ENCODE measurements at regions of chr2 and their contacts with region 1.

Region 1: GRCh38 chr2:85369500-85369899 is 14.9 kb downstream of the ELMOD3 start:
- DNase-seq: peak; percentile 83
- ATAC-seq: peak; percentile 100
- H3K4me3 ChIP-seq: no peak overlapping the region
- H3K27ac ChIP-seq: 0 out of 2 replicates have a peak overlapping the region, but pooled peaks have one; percentile 15
- H3K4me1 ChIP-seq: peaks cover 14% of the 10 kb centered on the region
- H3K27me3 ChIP-seq: no peaks in the 10 kb centered on the region
- CTCF ChIP-seq: no peak

Region 2: DNA sequence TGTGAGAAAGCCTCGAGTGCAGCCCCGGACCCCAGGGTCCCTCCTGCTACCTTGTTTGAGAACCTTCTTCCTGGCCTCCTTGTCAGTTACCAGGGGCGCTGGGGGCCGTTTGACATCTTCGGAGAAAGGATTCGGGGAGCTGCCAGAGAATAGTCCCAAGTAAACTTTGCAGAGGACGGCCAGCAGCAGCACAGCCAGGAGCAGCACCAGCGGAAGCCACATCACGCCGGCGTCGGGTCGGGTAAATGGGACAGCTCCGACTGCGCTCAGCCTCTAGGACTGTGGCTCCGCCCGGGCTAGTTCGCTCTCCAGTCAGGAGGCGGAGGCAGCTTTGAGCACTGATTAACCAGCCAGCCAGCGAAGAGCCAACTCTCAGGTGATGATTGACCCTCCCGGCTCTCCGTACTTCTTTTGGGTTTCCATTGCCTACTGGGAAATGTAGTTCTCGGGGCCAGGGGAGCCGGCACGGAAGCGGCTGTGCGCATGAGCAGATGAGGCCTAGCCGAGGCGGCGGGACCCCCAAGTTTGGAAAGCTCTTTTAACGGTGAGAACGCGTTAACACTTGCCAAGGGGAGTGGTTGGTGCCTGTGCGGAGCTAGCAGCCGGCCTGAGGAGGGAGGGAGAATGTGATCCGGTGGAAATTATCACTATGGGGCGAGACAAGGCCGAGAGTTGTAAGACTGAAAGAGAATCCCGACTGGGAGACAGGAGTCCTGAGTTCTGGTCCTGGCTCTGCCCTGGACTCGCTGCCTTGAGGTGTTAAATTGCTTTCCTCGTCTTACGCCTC is 15.0 kb before region 1 on chr2 and contains the starts of genes ELMOD3 and RETSAT:
- CTCF ChIA-PET with region 1: no interaction called
- POLR2A ChIA-PET with region 1: no interaction called
- intact Hi-C with region 1: loop called (anchors 1 kb)
- DNase-seq: peak; percentile 99
- ATAC-seq: peak; percentile 97
- H3K4me3 ChIP-seq: peak within 1 kb of the TSS; percentile 84
- H3K27ac ChIP-seq: peak within 1 kb of the TSS; percentile 61
- H3K4me1 ChIP-seq: peaks cover 32% of the 10 kb centered on the region
- H3K27me3 ChIP-seq: no peaks in the 10 kb centered on the region
- CTCF ChIP-seq: no peak
- total RNA-seq, gene ELMOD3: 16.7 and 19.0 TPM in 2 replicates
- total RNA-seq, gene RETSAT: 39.1 and 50.8 TPM in 2 replicates

Region 3: GRCh38 chr2:85524336-85524933 is 154.9 kb after region 1 on chr2:
- CTCF ChIA-PET with region 1: no interaction called
- POLR2A ChIA-PET with region 1: no interaction called
- intact Hi-C with region 1: no loop called
- DNase-seq: no peak
- ATAC-seq: peak; percentile 67
- H3K4me3 ChIP-seq: no peak overlapping the region
- H3K27ac ChIP-seq: no peak overlapping the region
- H3K4me1 ChIP-seq: 0 out of 2 replicates have a peak, but pooled peaks cover 5% of the 10 kb centered on the region
- H3K27me3 ChIP-seq: no peaks in the 10 kb centered on the region
- CTCF ChIP-seq: no peak

Region 4: GRCh38 chr2:85577386-85578242 is 208.1 kb after region 1 on chr2 and contains the start of gene VAMP8:
- CTCF ChIA-PET with region 1: no interaction called
- POLR2A ChIA-PET with region 1: interaction called, 14 read pairs
- intact Hi-C with region 1: no loop called
- DNase-seq: peak; percentile 80
- ATAC-seq: peak; percentile 90
- H3K4me3 ChIP-seq: peak within 1 kb of the TSS; percentile 73
- H3K27ac ChIP-seq: peak within 1 kb of the TSS; percentile 20
- H3K4me1 ChIP-seq: peaks cover 18% of the 10 kb centered on the region
- H3K27me3 ChIP-seq: no peaks in the 10 kb centered on the region
- CTCF ChIP-seq: no peak
- total RNA-seq, gene VAMP8: 141 and 142 TPM in 2 replicates

Measured in PC-3 (cell line).